CD14-positive monocyte (primary cell): ENCODE measurements at regions of chr20 and their contacts with region 1.

Region 1: DNA sequence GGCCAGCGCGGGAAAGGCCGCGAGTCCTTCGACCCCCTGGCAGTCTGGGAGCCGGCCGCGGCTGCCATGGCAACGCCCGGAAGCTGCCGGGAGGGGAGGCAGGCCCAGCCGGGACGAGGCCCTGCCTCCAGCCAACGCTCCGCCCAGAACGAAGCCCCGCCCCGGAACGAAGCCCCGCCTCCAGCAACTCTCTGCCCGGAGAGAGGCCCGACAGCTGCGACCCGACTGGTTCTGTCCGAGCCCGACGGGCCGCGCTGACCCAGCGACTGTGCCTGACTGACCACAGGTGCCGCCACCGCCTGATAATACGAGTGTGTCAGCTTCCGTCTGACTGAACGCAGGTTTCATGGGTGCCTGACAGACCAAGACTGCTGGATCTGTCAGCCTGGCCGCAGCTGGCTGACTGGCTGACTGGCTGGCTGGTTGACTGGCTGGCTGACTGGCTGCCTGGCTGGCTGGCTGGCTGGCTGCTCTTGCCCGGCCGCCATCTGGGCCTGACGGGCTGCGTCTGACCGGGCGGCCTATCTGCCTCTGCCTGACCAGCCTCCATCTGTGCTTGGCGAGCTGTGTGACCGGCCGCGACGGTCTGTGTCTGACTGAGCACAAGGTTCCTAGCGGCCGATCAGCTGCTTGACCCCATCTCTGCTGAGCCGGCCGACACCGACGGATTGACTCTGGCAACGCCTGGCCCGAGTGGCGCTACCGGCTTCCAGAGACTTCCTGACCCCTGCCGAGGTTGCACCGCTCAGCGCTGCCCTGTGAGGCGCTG is 89.7 kb upstream of the EPB41L1 start:
- DNase-seq: peak; percentile 88 to 90 (median 90)
- H3K4me3 ChIP-seq: peak overlapping the region; percentile 51 to 85 (median 67)
- H3K4me3 Mint-ChIP-seq: peak overlapping the region; percentile 83 to 92
- H3K27ac ChIP-seq: peak overlapping the region; percentile 68 to 80
- H3K27ac Mint-ChIP-seq: peak overlapping the region; percentile 76 to 91 (median 88)
- H3K4me1 ChIP-seq: peaks cover 16 to 17% of the 10 kb centered on the region in 2 donors
- H3K4me1 Mint-ChIP-seq: peaks cover 15% of the 10 kb centered on the region
- H3K27me3 ChIP-seq: peaks cover 0 to 5% of the 10 kb centered on the region in 2 donors
- H3K27me3 Mint-ChIP-seq: peaks cover 6 to 11% (median 7%) of the 10 kb centered on the region in 3 donors
- CTCF ChIP-seq: no peak

Region 2: DNA sequence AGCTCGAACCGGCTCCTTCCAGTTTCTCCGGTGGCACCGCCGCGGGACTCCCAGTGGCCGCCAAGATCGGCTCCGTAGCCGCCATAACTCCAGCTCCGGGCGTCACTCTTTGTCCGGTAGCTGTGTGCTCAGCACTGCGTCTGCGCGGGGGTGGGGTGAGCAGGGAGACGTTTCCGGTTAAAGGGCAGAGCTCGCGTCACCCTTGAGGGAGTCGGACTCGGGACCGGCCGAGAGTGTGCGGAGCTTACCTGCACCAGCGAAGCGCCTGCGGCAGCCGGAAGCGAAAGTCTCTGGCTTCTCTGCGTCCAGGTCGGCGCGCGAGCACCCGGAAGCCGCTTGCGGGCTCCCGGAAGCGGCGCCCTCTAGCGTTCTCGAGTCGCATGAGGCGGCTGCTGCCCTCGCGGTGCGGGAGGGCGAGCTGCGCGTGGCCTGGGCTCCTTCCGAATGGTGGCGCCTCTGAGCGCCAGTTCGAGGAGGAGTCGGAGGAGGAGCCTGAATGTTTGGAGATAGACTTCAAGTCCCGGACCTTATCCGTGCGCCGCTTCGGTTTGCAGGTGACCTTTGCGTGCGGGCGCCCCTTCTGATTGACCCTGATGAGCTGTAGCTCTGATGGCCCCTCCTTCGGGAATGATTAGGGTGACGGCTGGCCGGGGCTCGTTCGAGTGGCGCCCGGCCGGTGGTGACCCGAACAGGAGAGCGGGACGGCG is 110.5 kb before region 1 on chr20 and contains the start of gene SCAND1:
- intact Hi-C with region 1: loop called in 1 of 2 experiments (anchors 10 kb)
- DNase-seq: peak; percentile 92 to 95 (median 95)
- H3K4me3 ChIP-seq: peak within 1 kb of the TSS; percentile 82 to 94 (median 94)
- H3K4me3 Mint-ChIP-seq: peak within 1 kb of the TSS; percentile 97 to 100
- H3K27ac ChIP-seq: peak within 1 kb of the TSS; percentile 96 to 99
- H3K27ac Mint-ChIP-seq: peak within 1 kb of the TSS; percentile 96 to 99 (median 98)
- H3K4me1 ChIP-seq: peaks cover 22 to 29% of the 10 kb centered on the region in 2 donors
- H3K4me1 Mint-ChIP-seq: peaks cover 21% of the 10 kb centered on the region
- H3K27me3 ChIP-seq: no peaks in the 10 kb centered on the region
- H3K27me3 Mint-ChIP-seq: no peaks in the 10 kb centered on the region
- CTCF ChIP-seq: peak; percentile 97
- polyA plus RNA-seq, gene SCAND1: 43.6 to 227 (median 160) TPM